ENCODE measurements at regions of chr1 and their contacts with region 1.

Region 1: DNA sequence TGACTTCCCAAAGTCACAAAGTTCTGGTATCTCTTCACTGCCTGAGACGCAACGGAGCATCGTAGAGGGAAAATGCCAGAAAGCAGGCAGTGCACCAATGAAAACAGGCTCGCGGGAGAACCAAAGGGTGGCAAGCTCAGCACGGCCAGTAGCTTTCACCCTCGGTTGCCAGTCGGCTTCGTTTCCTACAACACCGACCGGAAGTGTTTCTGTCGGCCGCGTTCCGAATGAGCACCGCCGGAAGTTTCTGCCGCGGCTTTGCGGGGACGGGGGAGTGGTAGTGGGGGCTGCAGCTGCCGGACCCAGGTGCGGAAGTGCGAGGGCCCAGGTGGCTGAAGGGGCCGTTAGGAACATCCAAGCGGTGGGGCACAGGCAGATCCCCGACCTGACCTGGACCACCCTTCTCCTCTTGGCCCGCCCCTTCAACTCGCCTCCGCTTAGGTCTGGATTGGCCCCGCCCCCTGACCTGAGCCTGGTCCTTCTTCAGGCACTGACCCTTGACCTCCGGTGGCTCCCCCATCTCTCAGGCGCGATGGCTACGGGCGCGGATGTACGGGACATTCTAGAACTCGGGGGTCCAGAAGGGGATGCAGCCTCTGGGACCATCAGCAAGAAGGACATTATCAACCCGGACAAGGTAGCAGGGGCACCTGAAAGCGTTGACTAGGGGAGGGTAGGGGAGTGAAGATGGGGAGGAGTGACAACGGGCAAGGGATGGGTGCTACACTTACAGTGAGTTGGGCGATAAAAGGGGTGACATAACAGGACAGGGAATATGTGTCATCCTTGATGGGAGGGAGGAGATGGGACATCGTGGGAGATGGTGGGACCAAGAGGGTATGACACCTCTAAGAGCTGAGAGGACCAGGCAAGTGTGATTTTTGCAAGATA is at the start of gene DMAP1:
- DNase-seq: peak; percentile 65 to 80
- H3K4me3 ChIP-seq: peak within 1 kb of the TSS; percentile 86
- H3K27ac ChIP-seq: peak within 1 kb of the TSS; percentile 27; the same call in 1 of the 2 replicates
- H3K4me1 ChIP-seq: peaks cover 17% of the 10 kb centered on the region; the same call in 1 of the 2 replicates
- H3K27me3 ChIP-seq: no peaks in the 10 kb centered on the region
- CTCF ChIP-seq: no peak
- total RNA-seq, gene DMAP1: 54.2 and 68.4 TPM in 2 replicates

Region 2: GRCh38 chr1:44008259-44008658 is 205.2 kb before region 1 on chr1:
- CTCF ChIA-PET with region 1: no interaction called
- POLR2A ChIA-PET with region 1: interaction called, 5 read pairs
- intact Hi-C with region 1: loop called (anchors 5 kb)
- DNase-seq: no peak
- H3K4me3 ChIP-seq: no peak overlapping the region
- H3K27ac ChIP-seq: no peak overlapping the region
- H3K4me1 ChIP-seq: no peaks in the 10 kb centered on the region
- H3K27me3 ChIP-seq: no peaks in the 10 kb centered on the region
- CTCF ChIP-seq: no peak

Region 3: DNA sequence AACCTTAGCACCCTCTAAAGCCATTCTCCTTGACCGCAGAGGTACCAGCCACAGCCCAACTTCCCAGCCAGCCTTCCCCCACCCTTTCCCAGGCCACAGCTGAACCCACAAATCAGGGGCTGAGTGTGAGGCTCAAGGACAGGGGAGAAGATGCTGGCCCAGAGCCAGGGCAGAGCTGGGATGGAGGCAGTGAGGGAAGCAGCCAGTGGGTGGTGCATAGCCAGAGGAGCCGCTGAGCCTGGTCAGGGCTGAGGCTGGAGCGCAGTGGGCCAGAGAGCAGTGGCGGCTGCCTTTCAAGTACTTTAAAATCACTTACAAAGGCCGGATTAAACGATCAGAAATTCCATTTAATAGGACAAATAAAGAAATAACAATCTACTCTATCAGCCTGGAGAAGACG is 36.1 kb after region 1 on chr1:
- CTCF ChIA-PET with region 1: no interaction called
- POLR2A ChIA-PET with region 1: no interaction called
- intact Hi-C with region 1: no loop called
- DNase-seq: no peak
- H3K4me3 ChIP-seq: no peak overlapping the region
- H3K27ac ChIP-seq: no peak overlapping the region
- H3K4me1 ChIP-seq: no peaks in the 10 kb centered on the region
- H3K27me3 ChIP-seq: no peaks in the 10 kb centered on the region
- CTCF ChIP-seq: no peak

Measured in PC-9 (cell line).